Posterior cingulate gyrus (tissue), 11 donors: ENCODE measurements at regions of chr18 and their contacts with region 1.

Region 1: GRCh38 chr18:11937874-11938478 is 29.9 kb upstream of the MPPE1 start:
- DNase-seq: peak; percentile 29 to 96 (median 78)

Region 2: DNA sequence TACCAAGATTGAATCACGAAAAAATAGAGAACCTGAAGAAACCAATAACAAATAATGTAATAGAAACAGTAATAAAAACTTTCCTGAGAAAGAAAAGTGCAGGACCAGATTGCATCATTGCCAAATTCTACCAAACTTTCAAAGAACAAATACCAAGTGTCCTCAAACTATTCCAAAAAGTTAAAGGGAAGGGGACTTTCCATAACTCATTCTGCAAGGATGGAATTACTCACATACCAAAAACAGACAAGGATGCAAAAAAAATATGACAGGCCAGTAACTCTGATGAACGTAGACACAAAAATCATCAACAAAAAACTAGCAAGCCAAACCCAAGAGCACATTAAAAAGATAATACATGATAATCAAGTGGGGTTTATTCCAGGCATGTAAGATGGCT is 500.9 kb before region 1 on chr18:
- intact Hi-C with region 1: no loop called
- DNase-seq: no peak

Region 3: GRCh38 chr18:11983592-11983991 is 45.6 kb after region 1 on chr18:
- intact Hi-C with region 1: no loop called
- DNase-seq: peak in 3 of 10 donors; percentile 58 to 77 (median 69)

Region 4: DNA sequence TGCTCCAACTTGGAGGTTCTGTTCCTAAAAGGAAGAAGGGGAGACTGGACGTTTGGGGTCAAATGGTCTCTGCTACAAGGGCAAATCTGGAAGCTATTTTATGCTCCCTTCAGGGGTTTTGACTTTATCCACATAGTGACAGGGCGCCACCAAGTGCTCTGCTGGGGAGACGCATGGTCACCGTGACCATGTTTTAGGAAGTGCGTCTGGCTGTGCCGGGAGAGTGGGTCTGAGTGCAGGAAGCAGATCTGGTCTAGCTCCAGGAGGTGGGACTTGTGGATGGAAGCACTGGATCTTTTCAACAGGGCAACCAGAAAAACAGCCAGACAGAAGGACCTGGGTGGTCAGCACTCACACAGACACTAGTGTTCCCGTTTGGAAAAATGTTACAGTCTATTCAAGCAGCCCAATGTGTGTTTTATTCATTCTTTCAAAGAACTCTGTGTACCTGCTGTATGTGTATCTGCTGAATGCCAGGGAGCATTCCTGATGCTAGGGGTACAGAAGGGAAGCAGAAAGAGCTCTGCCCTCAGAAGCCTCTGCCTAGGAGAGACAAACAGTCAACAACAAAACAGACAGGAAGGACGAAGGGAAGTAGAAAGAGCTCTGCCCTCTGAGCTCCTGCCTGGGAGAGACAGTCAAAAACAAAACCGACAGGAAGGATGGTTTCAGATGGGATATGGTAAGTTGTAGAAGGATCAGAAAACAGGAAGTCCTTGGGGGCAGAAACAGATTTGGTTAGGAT is 57.6 kb after region 1 on chr18:
- intact Hi-C with region 1: loop called (anchors 2 kb)
- DNase-seq: peak in 9 of 10 donors; percentile 38 to 93 (median 61)